ENCODE measurements at regions of chr7 and their contacts with region 1.

Region 1: GRCh38 chr7:43314379-43315189 is 202.1 kb downstream of the HECW1 start:
- DNase-seq: no peak
- H3K4me3 Mint-ChIP-seq: no peak overlapping the region
- H3K27ac Mint-ChIP-seq: no peak overlapping the region
- H3K4me1 Mint-ChIP-seq: no peaks in the 10 kb centered on the region
- H3K27me3 Mint-ChIP-seq: peaks cover 21% of the 10 kb centered on the region
- CTCF ChIP-seq: no peak

Region 2: DNA sequence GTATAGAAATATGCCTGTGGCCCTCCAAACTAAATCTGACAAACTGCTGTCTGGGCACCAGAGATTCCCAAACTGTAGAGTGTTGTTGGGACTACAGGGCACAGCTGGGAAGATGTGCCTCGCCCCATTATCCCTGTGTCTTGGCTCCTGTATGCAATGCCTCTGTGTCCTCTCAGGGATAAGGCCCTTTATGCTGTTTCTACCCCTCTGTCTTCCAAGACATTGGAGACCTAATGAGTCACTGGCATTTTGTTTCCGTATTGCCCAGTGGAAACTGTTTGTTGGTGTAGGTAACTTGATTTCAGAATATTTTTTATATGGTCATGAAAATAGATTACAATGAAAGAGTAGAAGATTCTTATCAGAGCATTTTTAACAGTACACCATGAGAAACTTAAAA is 1260.8 kb before region 1 on chr7:
- CTCF ChIA-PET with region 1: interaction called, 10 read pairs
- intact Hi-C with region 1: no loop called
- DNase-seq: no peak
- H3K4me3 Mint-ChIP-seq: no peak overlapping the region
- H3K27ac Mint-ChIP-seq: no peak overlapping the region
- H3K4me1 Mint-ChIP-seq: no peaks in the 10 kb centered on the region
- H3K27me3 Mint-ChIP-seq: peaks cover 20% of the 10 kb centered on the region
- CTCF ChIP-seq: no peak

Region 3: DNA sequence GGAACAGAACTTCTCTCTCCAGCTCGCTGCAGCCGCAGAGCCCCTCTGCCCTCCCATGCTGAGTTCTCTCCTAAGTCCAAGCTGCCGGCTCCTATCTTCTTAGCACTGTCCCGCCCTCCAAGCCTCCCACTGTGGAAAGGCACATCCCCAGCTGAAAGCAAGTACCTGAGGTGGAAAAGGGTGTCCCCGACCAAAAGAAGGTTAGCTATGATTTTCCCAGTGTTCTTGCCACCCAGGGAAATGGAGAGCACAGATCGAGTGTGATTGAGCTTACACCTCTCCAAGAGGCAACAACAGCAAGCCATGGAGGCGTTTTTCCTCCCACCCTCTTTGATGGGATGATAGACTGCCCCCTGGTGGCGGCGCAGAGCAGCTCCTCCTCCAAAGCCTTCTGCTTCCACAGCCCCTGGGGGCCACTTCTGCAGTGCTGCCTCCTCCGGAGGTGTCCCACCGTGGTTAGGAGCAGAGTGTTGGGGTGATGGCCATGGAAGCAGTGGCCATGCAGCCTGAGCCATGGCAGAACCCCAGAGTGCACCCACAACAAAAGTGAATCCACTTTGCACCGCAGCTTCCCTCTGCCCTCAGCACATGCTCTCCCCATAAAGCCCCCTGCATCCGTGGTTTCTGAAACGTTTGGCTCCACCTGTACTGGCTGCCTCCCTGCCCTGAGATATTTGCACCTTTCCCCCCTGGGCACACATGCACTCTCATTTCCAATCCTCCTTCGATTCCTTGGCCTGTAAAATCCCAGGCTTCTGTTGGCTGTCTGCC is 125.2 kb after region 1 on chr7:
- CTCF ChIA-PET with region 1: interaction called, 5 read pairs
- intact Hi-C with region 1: loop called (anchors 10 kb)
- DNase-seq: peak; percentile 74
- H3K4me3 Mint-ChIP-seq: peak overlapping the region; percentile 16
- H3K27ac Mint-ChIP-seq: no peak overlapping the region
- H3K4me1 Mint-ChIP-seq: no peaks in the 10 kb centered on the region
- H3K27me3 Mint-ChIP-seq: peaks cover 21% of the 10 kb centered on the region
- CTCF ChIP-seq: peak; percentile 99

Region 4: DNA sequence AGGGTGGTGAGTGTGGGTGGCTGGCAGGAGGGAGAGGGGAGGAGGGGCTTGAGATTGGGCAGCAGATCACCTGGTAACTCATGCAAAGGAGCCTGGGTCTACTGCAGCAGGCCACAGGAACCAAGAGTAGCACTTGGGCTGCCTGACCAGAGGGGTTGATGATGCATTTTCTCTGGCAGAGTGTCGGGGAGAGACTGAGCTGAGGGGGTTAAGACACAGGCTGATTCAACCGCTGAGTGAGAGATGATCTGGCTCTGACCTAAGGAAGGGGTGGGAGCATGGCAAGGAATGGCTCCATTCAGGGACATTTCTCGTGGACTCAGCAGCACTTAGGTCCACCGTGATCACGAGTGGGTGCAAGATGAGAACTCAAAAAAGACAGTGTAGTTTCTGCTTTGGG is 152.8 kb after region 1 on chr7:
- CTCF ChIA-PET with region 1: no interaction called
- intact Hi-C with region 1: no loop called
- DNase-seq: no peak
- H3K4me3 Mint-ChIP-seq: no peak overlapping the region
- H3K27ac Mint-ChIP-seq: no peak overlapping the region
- H3K4me1 Mint-ChIP-seq: no peaks in the 10 kb centered on the region
- H3K27me3 Mint-ChIP-seq: no peaks in the 10 kb centered on the region
- CTCF ChIP-seq: no peak